AG04450 (cell line): ENCODE measurements at regions of chr3 and their contacts with region 1.

Region 1: GRCh38 chr3:4712143-4712542 is 219.0 kb downstream of the ITPR1 start:
- DNase-seq: no peak
- H3K4me3 ChIP-seq: no peak overlapping the region
- H3K27ac ChIP-seq: no peak overlapping the region
- H3K27me3 ChIP-seq: no peaks in the 10 kb centered on the region
- CTCF ChIP-seq: no peak

Region 2: GRCh38 chr3:4504340-4505261 is 207.5 kb before region 1 on chr3:
- CTCF ChIA-PET with region 1: no interaction called
- POLR2A ChIA-PET with region 1: no interaction called
- DNase-seq: no peak
- H3K4me3 ChIP-seq: no peak overlapping the region; the same call in 1 of the 2 replicates
- H3K27ac ChIP-seq: peak overlapping the region; percentile 12
- H3K27me3 ChIP-seq: no peaks in the 10 kb centered on the region
- CTCF ChIP-seq: no peak

Region 3: GRCh38 chr3:4674216-4674615 is 37.9 kb before region 1 on chr3:
- CTCF ChIA-PET with region 1: interaction called, 22 read pairs
- POLR2A ChIA-PET with region 1: no interaction called
- DNase-seq: peak; percentile 15
- H3K4me3 ChIP-seq: no peak overlapping the region
- H3K27ac ChIP-seq: no peak overlapping the region
- H3K27me3 ChIP-seq: no peaks in the 10 kb centered on the region
- CTCF ChIP-seq: no peak

Region 4: DNA sequence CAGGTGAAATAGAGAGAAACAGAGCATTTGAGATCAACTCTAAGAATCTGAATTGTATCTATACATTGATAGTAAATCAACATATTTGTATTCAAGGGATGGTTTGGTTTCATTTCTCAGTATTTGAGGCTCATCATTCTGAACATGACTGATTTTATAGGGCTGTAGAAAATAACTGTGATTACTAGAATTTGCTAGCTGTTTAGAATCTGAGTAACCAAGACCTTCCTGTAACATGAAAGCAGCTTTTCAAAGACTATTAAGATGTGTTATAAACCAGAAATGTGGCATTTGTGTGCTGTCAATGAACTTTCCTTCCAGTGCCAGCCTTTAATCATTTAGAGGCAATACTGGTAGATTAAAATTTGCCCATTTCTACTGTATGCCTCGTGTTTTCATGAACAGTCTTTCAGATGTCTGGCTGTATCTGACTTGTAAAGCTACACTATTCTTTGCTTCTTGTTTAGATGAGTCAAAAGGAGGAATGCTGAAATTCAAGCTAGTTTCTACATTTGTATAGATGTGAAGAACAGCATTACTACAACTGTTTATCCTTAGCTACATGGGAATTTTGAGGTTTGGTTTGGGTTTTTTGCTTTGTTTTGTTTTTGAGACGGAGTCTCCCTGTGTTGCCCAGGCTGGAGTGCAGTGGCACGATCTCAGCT is 129.8 kb after region 1 on chr3:
- CTCF ChIA-PET with region 1: interaction called, 10 read pairs
- POLR2A ChIA-PET with region 1: no interaction called
- DNase-seq: peak; percentile 61
- H3K4me3 ChIP-seq: no peak overlapping the region
- H3K27ac ChIP-seq: peak overlapping the region; percentile 72
- H3K27me3 ChIP-seq: no peaks in the 10 kb centered on the region
- CTCF ChIP-seq: no peak

Region 5: DNA sequence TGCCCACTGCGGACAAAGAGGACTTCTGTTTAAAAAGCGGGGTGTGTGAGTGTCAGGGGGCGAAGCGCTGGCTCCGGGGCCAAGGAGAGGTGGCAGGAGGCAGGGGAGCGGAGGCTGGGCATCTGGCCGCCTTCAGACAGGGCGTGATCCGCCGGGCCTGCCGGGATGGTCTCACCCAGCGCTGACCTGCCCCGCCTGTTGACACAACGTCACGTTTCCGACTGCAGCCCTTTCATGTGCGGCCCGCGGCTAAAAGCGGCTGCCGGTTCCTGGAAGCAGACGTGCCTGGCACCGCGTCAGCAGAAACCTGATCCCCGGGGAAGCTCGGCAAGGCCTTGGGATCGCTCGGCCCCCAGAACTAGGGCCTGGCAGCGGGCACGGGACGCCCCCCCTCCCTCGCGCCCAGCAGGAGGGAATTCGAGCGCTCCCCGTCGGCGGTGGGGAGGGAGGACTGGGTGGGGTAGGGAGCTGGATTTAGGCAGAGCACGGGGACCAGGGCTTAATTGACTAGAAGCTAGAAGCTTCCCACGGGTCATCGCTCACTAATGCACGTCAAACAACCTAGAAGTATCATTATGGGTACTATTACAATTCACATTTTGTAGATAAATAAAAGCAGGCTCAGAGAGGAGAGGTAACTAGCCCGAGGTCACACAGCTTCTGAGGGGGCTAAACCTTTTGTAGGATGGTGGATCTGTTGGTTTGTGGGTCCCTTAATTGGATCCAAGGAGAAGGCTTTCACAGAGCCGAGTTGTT is 274.8 kb after region 1 on chr3:
- CTCF ChIA-PET with region 1: interaction called, 25 read pairs
- POLR2A ChIA-PET with region 1: interaction called, 3 read pairs
- DNase-seq: peak; percentile 89
- H3K4me3 ChIP-seq: peak overlapping the region; percentile 48
- H3K27ac ChIP-seq: peak overlapping the region; percentile 87
- H3K27me3 ChIP-seq: no peaks in the 10 kb centered on the region
- CTCF ChIP-seq: 0 out of 2 replicates have a peak, but pooled peaks have one; percentile 3

Region 6: GRCh38 chr3:5035692-5036391 is 323.7 kb after region 1 on chr3:
- CTCF ChIA-PET with region 1: interaction called, 11 read pairs
- POLR2A ChIA-PET with region 1: no interaction called
- DNase-seq: no peak
- H3K4me3 ChIP-seq: no peak overlapping the region
- H3K27ac ChIP-seq: no peak overlapping the region
- H3K27me3 ChIP-seq: peaks cover 4% of the 10 kb centered on the region
- CTCF ChIP-seq: no peak

Region 7: DNA sequence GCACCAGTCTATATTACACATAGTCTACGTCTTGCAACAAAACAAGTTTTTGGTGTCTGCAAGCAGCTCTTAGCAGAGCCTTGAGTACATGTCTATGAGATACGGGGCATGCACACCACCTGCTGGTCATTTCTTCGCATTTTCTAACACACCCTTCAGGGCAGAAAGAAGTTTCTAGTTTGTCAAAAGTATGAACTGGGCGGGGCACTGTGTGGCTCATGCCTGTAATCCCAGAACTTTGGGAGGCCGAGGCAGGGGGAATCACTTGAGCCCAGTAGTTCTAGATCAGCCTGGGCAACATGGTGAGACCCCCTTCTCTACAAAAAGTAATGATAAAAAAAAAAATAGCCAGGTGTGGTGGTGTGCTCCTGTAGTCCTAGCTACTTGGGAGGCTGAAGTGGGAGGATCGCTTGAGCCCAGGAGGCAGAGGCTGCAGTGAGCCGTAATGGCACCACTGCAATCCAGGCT is 345.7 kb after region 1 on chr3:
- CTCF ChIA-PET with region 1: interaction called, 184 read pairs
- POLR2A ChIA-PET with region 1: interaction called, 3 read pairs
- DNase-seq: peak; percentile 67
- H3K4me3 ChIP-seq: no peak overlapping the region
- H3K27ac ChIP-seq: no peak overlapping the region
- H3K27me3 ChIP-seq: no peaks in the 10 kb centered on the region
- CTCF ChIP-seq: peak; percentile 82

Region 8: DNA sequence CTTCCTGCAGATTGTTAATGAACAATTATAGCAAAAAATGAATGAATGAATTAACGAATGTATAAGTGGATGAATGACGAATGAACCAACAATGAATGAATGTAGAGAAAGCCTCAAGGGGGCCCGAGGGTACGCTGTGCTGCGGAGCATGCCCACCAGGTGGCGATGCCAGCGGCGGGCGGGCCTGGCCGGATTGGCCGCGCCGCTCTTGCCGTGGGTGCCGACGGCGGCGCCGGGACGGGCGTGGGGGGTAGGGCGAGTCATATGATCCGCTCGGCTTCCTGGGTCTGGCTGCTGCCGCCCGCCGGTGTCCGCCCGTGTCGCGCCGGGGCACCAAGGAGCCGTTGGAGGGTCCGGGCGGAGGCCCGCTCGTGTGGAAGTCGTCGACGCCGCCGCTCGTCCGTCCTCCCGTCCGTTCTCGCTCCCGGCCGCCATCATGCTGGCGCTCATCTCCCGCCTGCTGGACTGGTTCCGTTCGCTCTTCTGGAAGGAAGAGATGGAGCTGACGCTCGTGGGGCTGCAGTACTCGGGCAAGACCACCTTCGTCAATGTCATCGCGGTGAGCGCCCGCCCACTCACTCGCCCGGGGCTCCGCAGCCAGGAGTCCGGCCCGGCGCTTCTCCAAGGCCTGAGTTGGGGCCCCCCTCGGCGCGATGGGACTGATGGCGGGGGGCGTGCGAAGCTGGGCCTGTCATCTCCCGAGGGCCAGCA is 410.0 kb after region 1 on chr3 and contains the start of gene ARL8B:
- CTCF ChIA-PET with region 1: interaction called, 17 read pairs
- POLR2A ChIA-PET with region 1: no interaction called
- DNase-seq: peak; percentile 58
- H3K4me3 ChIP-seq: peak within 1 kb of the TSS; percentile 93
- H3K27ac ChIP-seq: peak within 1 kb of the TSS; percentile 85
- H3K27me3 ChIP-seq: no peaks in the 10 kb centered on the region
- CTCF ChIP-seq: peak; percentile 91
- polyA plus RNA-seq, gene ARL8B: 47.0 and 53.6 TPM in 2 replicates